ENCODE measurements at regions of chr6 and their contacts with region 1.

Region 1: GRCh38 chr6:22251331-22251730 is 45.5 kb downstream of the PRL start:
- DNase-seq: peak in 1 of 2 experiments; percentile 80
- H3K4me3 ChIP-seq: no peak overlapping the region
- H3K27ac ChIP-seq: peak overlapping the region; percentile 8; the same call in 1 of the 2 replicates
- H3K4me1 ChIP-seq: peaks cover 37% of the 10 kb centered on the region
- H3K27me3 ChIP-seq: no peaks in the 10 kb centered on the region
- CTCF ChIP-seq: no peak

Region 2: GRCh38 chr6:21348504-21349195 is 902.7 kb before region 1 on chr6:
- CTCF ChIA-PET with region 1: no interaction called
- POLR2A ChIA-PET with region 1: interaction called, 11 read pairs
- intact Hi-C with region 1: no loop called
- DNase-seq: peak in 1 of 2 experiments; percentile 68
- H3K4me3 ChIP-seq: no peak overlapping the region
- H3K27ac ChIP-seq: no peak overlapping the region
- H3K4me1 ChIP-seq: no peaks in the 10 kb centered on the region
- H3K27me3 ChIP-seq: no peaks in the 10 kb centered on the region
- CTCF ChIP-seq: no peak

Region 3: DNA sequence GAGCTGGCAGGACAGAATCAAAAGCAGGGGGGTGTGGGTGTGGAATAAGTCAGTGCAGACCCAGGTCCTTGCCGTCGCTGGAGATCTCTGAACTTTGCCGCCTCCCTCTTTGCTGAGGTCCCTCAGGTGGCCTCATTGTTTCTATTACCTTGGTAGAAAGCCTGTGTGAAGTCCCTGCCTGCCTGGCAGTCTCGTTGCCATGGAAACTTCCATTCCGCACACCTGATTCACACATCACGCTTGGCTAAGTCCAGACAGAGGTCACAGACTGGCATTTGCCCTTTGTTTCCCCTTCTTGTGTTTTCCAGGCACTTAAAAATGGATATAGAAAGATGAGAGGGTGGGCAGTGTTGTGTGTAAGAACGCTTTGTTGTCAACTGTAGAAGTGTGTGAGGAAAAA is 215.1 kb before region 1 on chr6:
- CTCF ChIA-PET with region 1: no interaction called
- POLR2A ChIA-PET with region 1: no interaction called
- intact Hi-C with region 1: loop called (anchors 5 kb)
- DNase-seq: peak; percentile 84 to 91
- H3K4me3 ChIP-seq: peak overlapping the region; percentile 18; the same call in 1 of the 2 replicates
- H3K27ac ChIP-seq: peak overlapping the region; percentile 34; the same call in 1 of the 2 replicates
- H3K4me1 ChIP-seq: peaks cover 22% of the 10 kb centered on the region
- H3K27me3 ChIP-seq: no peaks in the 10 kb centered on the region
- CTCF ChIP-seq: no peak

Measured in PC-9 (cell line).